ENCODE measurements at regions of chr7 and their contacts with region 1.

Region 1: DNA sequence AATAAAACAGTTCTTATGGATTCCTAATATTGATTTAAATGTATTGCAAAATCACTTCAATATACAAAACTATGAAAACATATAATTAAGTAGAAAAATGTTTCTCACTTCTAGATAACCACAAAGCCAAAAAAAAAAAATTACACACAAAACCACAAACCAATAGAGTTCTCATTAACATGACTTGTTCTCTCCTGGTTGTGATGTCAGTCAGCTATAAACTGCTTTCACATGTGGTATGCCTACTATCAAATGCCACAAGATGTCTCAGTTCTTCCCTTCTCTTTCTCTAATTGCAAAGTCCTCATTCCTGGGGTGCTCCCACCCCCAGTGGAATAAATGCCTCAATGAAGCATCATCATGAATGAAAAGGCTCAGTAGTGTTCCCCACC is 16.6 kb downstream of the GNAI1 start:
- DNase-seq: peak; percentile 65
- H3K4me3 Mint-ChIP-seq: peak overlapping the region; percentile 25
- H3K27ac Mint-ChIP-seq: peak overlapping the region; percentile 78
- H3K4me1 Mint-ChIP-seq: peaks cover 14% of the 10 kb centered on the region
- H3K27me3 Mint-ChIP-seq: peaks cover 19% of the 10 kb centered on the region

Region 2: DNA sequence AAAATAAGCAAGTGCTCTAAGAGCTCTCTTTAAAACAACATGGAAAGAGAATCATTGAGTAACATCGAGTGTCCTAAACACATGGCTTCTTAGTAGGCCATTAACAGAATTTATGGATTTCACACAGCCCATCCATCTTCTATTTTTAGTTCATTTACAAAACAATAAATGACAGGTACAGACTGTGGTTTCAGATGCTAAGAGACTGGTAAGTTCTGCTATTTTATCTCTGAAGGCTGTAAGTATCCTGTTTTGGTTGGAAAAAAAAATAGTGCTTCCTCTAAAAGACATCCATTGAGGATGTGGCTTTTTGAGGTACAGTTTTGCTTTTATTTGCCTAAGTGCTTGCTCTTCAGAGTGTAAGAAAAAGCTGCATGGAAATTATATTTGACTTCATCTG is 44.0 kb before region 1 on chr7:
- intact Hi-C with region 1: loop called (anchors 2 kb)
- DNase-seq: no peak
- H3K4me3 Mint-ChIP-seq: peak overlapping the region; percentile 28
- H3K27ac Mint-ChIP-seq: no peak overlapping the region
- H3K4me1 Mint-ChIP-seq: peaks cover 21% of the 10 kb centered on the region
- H3K27me3 Mint-ChIP-seq: no peaks in the 10 kb centered on the region

Region 3: GRCh38 chr7:80175744-80176143 is 24.5 kb after region 1 on chr7:
- intact Hi-C with region 1: loop called (anchors 1 kb)
- DNase-seq: no peak
- H3K4me3 Mint-ChIP-seq: no peak overlapping the region
- H3K27ac Mint-ChIP-seq: peak overlapping the region; percentile 41
- H3K4me1 Mint-ChIP-seq: peaks cover 13% of the 10 kb centered on the region
- H3K27me3 Mint-ChIP-seq: no peaks in the 10 kb centered on the region

Region 4: DNA sequence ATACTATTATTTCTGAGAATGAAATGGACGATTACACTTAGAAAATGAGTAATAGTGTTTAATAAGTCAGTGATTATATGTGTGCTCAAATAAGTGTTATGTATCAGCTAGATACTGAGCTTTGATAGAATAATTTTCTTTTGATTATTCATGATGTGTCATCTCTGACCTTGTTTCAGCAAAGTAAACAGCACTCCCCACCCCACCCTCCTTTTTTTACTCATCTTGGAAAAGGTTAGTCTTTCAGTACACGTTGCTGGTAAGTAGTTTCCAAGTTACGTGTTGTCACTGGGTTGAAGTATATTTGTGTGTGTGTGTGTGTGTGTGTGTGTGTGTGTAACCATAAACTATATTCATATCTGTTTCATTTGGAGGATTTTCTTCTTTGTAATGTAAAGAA is 67.5 kb after region 1 on chr7:
- intact Hi-C with region 1: loop called (anchors 1 kb)
- DNase-seq: no peak
- H3K4me3 Mint-ChIP-seq: no peak overlapping the region
- H3K27ac Mint-ChIP-seq: no peak overlapping the region
- H3K4me1 Mint-ChIP-seq: peaks cover 9% of the 10 kb centered on the region
- H3K27me3 Mint-ChIP-seq: no peaks in the 10 kb centered on the region

Region 5: GRCh38 chr7:80346704-80347103 is 195.4 kb after region 1 on chr7:
- intact Hi-C with region 1: loop called (anchors 2 kb)
- DNase-seq: no peak
- H3K4me3 Mint-ChIP-seq: no peak overlapping the region
- H3K27ac Mint-ChIP-seq: no peak overlapping the region
- H3K4me1 Mint-ChIP-seq: no peaks in the 10 kb centered on the region
- H3K27me3 Mint-ChIP-seq: no peaks in the 10 kb centered on the region

Measured in activated CD4-positive, alpha-beta T cell treated with anti-CD3 and anti-CD28 coated beads, Interleukin-2, amount 10 ng/mL, durations not matched to agents 24 days and 14 days (primary cell).